Dorsolateral prefrontal cortex (tissue), 120 donors: ENCODE measurements at regions of chrX and their contacts with region 1.

Region 1: GRCh38 chrX:33434256-33435092 is 223.1 kb upstream of the DMD start:
- DNase-seq: peak in 6 of 10 donors; percentile 39 to 74 (median 51)
- H3K4me3 ChIP-seq: peak overlapping the region in 2 of 59 donors; percentile 4 to 21
- H3K27ac ChIP-seq: no peak overlapping the region
- H3K27me3 ChIP-seq: peaks cover 0 to 49% (median 6%) of the 10 kb centered on the region in 45 donors
- CTCF ChIP-seq: peak; percentile 36 to 95 (median 87)

Region 2: GRCh38 chrX:34299451-34299967 is 865.0 kb after region 1 on chrX:
- intact Hi-C with region 1: loop called in 1 of 2 experiments (anchors 10 kb)
- DNase-seq: no peak
- H3K4me3 ChIP-seq: no peak overlapping the region
- H3K27ac ChIP-seq: no peak overlapping the region
- H3K27me3 ChIP-seq: peaks cover 0 to 54% (median 4%) of the 10 kb centered on the region in 45 donors
- CTCF ChIP-seq: no peak